Psoas muscle (tissue), 8 donors: ENCODE measurements at regions of chr21 and their contacts with region 1.

Region 1: DNA sequence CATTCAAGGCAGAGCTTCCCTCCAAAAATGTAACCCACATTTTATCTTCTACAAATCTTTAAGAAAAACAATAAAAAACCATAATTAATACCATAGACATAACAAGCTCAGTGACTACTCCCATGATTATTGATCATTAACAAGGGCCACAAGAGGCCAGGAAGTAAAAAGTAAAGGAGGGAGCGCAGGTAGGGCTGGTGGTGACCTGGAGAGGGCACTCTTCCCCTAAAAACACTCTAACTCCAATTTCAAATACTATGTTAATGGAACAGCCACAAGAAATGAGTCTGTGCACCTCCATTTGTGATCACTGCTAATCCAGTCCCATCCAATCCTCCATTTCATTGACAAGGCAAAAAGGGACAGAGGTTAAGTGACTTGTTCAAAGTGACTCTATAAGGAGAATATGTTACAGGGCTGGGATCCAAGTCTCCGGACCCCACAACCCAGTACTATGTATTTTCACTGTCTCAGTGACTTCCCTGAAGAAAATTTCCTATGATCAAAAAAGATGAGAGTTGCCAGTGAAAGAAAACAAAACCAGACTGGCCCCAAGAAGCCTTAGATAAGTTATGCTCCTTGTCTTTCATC is 41.2 kb upstream of the CFAP298 start:
- DNase-seq: no peak
- ATAC-seq: peak in 1 of 4 donors; percentile 56
- H3K4me3 ChIP-seq: no peak overlapping the region
- H3K27ac ChIP-seq: no peak overlapping the region
- H3K4me1 ChIP-seq: no peaks in the 10 kb centered on the region
- H3K27me3 ChIP-seq: no peaks in the 10 kb centered on the region
- CTCF ChIP-seq: peak; percentile 53

Region 2: DNA sequence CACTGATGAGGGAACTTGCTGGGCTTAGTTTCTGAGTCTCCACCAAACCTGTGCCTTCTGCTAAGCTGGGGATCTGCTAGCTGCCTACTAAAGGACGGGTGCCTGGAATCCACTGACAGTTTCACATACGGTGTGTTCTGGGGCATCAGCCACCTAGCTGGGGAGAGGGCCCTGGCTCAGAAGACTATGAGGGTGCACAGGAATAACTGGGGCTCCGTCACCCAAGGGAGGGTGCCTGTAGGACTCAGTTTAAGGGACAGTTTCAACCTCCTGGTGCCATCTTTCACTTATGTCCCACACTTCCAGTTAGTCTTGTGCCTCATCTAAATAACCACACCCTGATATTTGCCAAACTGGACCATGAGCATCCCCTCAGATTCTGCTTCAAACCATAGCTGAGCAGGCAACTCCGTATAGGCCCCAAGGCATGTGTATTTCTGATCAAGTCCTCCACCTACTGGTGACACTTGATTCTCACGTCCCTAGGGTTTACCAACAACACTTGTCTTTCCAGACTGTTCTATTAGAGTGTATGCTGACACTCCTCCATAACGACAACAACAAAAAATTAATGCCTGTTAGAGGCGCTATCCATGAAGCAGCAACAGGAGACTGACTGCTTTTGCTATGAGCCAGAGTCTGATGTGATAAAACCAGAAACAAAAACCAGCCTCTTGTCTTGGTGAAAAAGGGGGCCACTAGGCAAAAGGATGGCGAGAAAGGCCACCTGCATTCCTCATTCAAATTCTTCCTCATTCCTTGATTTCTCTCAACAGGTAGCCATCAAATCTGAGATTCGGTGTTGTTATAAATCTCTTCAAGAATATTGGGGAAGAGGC is 173.1 kb after region 1 on chr21:
- intact Hi-C with region 1: loop called in 1 of 2 experiments (anchors 10 kb)
- DNase-seq: no peak
- ATAC-seq: peak in 3 of 4 donors; percentile 49 to 62 (median 62)
- H3K4me3 ChIP-seq: no peak overlapping the region
- H3K27ac ChIP-seq: no peak overlapping the region
- H3K4me1 ChIP-seq: no peaks in the 10 kb centered on the region
- H3K27me3 ChIP-seq: no peaks in the 10 kb centered on the region
- CTCF ChIP-seq: peak; percentile 38